Activated B cell treated with CpG ODN at 0.5 μM for 24 hours (primary cell): ENCODE measurements at regions of chr12 and their contacts with region 1.

Region 1: GRCh38 chr12:53645165-53645564 is 19.0 kb upstream of the ATF7 start:
- DNase-seq: no peak
- ATAC-seq: no peak
- H3K4me3 Mint-ChIP-seq: no peak overlapping the region
- H3K27ac Mint-ChIP-seq: no peak overlapping the region
- H3K4me1 Mint-ChIP-seq: no peaks in the 10 kb centered on the region
- H3K27me3 Mint-ChIP-seq: no peaks in the 10 kb centered on the region
- CTCF ChIP-seq: no peak

Region 2: DNA sequence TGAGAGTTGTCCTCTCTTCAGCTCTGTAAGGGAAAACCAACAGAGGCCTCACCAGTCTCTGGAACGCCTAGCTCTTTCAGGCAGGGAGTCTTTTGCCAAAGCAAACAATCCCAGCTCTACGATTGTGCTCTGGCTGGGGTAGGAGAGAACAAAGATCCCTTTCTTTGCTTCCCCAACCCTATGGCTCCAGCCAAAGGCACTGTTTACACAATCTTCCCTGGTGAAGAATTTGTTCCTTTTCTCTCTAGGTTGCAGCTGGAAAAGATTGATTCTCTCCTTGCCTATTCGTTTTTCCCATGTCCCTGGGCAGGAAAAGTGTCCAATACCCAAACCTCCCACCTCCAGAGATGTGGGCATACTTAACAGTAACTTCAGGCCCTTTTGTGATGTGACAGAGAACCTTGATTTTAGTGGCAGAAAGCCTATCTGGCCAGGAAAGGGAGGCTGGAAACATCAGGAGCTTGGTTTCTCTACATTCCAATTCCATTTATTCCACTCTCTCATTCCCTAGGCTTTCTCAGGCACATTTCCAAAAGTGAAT is 13.9 kb after region 1 on chr12:
- CTCF ChIA-PET with region 1: no interaction called
- POLR2A ChIA-PET with region 1: no interaction called
- intact Hi-C with region 1: no loop called
- DNase-seq: no peak
- ATAC-seq: no peak
- H3K4me3 Mint-ChIP-seq: no peak overlapping the region
- H3K27ac Mint-ChIP-seq: no peak overlapping the region
- H3K4me1 Mint-ChIP-seq: no peaks in the 10 kb centered on the region
- H3K27me3 Mint-ChIP-seq: no peaks in the 10 kb centered on the region
- CTCF ChIP-seq: no peak

Region 3: GRCh38 chr12:53670299-53670698 is 25.1 kb after region 1 on chr12:
- CTCF ChIA-PET with region 1: no interaction called
- POLR2A ChIA-PET with region 1: interaction called, 10 read pairs
- intact Hi-C with region 1: no loop called
- DNase-seq: no peak
- ATAC-seq: no peak
- H3K4me3 Mint-ChIP-seq: no peak overlapping the region
- H3K27ac Mint-ChIP-seq: no peak overlapping the region
- H3K4me1 Mint-ChIP-seq: peaks cover 19% of the 10 kb centered on the region
- H3K27me3 Mint-ChIP-seq: no peaks in the 10 kb centered on the region
- CTCF ChIP-seq: no peak